ENCODE measurements at regions of chr16 and their contacts with region 1.

Region 1: GRCh38 chr16:80792031-80792430 is 12.4 kb downstream of the CDYL2 start:
- DNase-seq: no peak
- ATAC-seq: no peak

Region 2: DNA sequence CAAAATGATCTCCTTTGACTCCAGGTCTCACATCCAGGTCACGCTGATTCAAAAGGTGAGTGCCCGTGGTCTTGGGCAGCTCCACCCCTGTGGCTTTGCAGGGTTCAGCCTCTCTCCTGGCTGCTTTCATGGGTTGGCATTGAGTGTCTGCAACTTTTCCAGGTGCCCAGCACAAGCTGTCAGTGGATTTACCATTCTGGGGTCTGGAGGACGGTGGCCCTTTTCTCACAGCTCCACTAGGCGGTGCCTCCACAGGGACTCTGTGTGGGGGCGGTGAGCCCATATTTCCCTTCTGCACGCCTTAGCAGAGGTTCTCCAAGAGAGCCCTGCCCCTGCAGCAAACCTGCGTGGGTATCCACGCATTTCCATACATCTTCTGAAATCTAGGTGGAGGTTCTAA is 148.8 kb before region 1 on chr16:
- intact Hi-C with region 1: no loop called
- DNase-seq: no peak
- ATAC-seq: no peak

Region 3: DNA sequence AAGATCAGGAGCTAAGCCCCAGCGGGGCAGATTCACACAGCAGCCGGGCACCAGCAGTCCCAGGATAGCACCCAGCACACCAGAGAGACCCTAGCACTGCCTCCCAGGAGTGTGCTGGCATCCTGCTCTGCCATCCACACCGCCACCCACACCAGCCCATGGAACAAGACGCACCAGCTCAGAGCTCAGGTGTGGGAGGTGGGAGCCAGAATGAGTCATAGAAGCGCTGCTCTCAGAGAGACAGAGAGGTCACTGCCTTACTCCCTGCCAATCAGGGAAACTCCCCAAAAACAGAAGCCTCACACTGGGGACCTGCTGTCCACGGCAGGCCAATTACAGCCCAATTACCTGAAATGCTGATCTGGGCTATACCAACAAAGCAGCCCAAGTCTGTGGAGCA is 52.5 kb before region 1 on chr16:
- intact Hi-C with region 1: loop called (anchors 10 kb)
- DNase-seq: no peak
- ATAC-seq: no peak